Heart right ventricle (tissue), 16 donors: ENCODE measurements at regions of chr2 and their contacts with region 1.

Region 1: GRCh38 chr2:188291617-188292347 is at the start of gene GULP1:
- DNase-seq: peak; percentile 69 to 76
- ATAC-seq: peak; percentile 85 to 93 (median 90)
- H3K4me3 ChIP-seq: peak within 1 kb of the TSS; percentile 53 to 82 (median 72)
- H3K27ac ChIP-seq: peak within 1 kb of the TSS; percentile 63 to 92 (median 80)
- H3K4me1 ChIP-seq: peaks cover 0 to 35% (median 15%) of the 10 kb centered on the region in 9 donors
- H3K27me3 ChIP-seq: peaks cover 0 to 34% (median 0%) of the 10 kb centered on the region in 7 donors
- CTCF ChIP-seq: peak; percentile 41 to 79 (median 67)
- total RNA-seq, gene GULP1: 2.0 to 6.0 (median 4.9) TPM

Region 2: DNA sequence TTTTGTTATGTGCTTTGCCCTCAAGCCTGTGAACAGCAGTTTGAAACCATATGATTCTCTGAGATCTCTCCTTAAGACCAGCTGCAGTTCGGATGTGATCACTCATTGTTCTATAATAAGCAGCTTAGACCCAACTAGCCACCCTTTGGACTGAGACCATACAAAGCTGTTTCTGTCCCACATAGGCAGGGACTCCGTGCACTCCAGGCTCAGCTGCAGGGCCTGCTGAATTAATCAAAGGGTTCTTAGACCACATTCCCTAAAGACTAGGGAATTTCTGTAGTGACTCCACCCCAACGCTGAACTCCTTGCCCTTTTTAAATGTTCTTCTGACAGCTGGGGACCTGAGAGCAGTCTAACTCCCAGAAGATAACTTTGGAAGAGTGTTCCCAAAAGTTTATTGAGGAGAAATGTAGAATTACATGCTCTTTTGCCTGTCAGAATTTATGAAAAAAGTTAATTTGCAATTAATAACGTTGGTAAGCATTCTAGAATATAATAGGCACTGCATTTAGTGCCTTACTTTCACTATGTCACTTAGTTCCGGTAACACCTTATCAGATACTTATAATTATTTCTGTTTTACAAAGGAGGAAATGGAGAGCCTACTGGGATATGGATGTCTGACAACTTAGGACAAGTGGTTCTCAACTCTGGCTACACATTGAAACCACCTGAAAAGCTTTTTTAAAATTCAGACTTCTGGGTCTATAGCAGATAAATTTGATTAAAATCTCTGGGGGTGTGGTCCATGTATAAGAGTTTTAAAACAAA is 42.2 kb after region 1 on chr2:
- intact Hi-C with region 1: loop called in 3 of 10 experiments (anchors 5 kb)
- DNase-seq: peak; percentile 17 to 40
- ATAC-seq: peak; percentile 70 to 92 (median 90)
- H3K4me3 ChIP-seq: peak overlapping the region in 4 of 10 donors; percentile 16 to 20 (median 18)
- H3K27ac ChIP-seq: peak overlapping the region in 8 of 10 donors; percentile 27 to 64 (median 52)
- H3K4me1 ChIP-seq: peaks cover 0 to 30% (median 12%) of the 10 kb centered on the region in 9 donors
- H3K27me3 ChIP-seq: no peaks in the 10 kb centered on the region
- CTCF ChIP-seq: no peak

Region 3: GRCh38 chr2:188369365-188369764 is 77.6 kb after region 1 on chr2:
- intact Hi-C with region 1: loop called in 5 of 10 experiments (anchors 5 to 10 kb)
- DNase-seq: peak in 1 of 2 donors; percentile 51
- ATAC-seq: peak in 7 of 8 donors; percentile 67 to 78 (median 71)
- H3K4me3 ChIP-seq: no peak overlapping the region
- H3K27ac ChIP-seq: no peak overlapping the region
- H3K4me1 ChIP-seq: peaks cover 0 to under 1% (median 0%) of the 10 kb centered on the region in 9 donors
- H3K27me3 ChIP-seq: no peaks in the 10 kb centered on the region
- CTCF ChIP-seq: peak; percentile 30 to 79 (median 69)

Region 4: DNA sequence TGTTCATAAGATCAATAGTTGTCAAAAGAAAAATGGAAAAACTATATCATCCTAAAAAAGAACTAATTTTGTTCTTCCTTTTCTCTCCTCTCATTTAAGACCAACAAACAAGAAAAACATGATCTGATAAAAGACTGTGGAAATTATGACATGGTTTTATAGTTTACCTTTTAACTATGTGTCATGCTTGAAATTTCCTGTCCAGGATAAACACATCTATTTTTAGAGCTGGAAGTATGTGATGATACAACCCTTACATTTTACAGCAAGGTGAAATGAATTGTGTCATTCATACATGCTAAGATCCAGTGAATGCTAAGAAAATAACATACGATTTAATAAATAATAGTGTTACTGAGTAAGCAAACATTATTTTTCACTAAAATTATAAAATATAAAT is 89.8 kb after region 1 on chr2:
- intact Hi-C with region 1: loop called in 2 of 10 experiments (anchors 5 to 10 kb)
- DNase-seq: no peak
- ATAC-seq: peak in 1 of 8 donors; percentile 27
- H3K4me3 ChIP-seq: no peak overlapping the region
- H3K27ac ChIP-seq: peak overlapping the region in 1 of 10 donors; percentile 25
- H3K4me1 ChIP-seq: peaks cover 0 to 20% (median 9%) of the 10 kb centered on the region in 9 donors
- H3K27me3 ChIP-seq: no peaks in the 10 kb centered on the region
- CTCF ChIP-seq: no peak

Region 5: DNA sequence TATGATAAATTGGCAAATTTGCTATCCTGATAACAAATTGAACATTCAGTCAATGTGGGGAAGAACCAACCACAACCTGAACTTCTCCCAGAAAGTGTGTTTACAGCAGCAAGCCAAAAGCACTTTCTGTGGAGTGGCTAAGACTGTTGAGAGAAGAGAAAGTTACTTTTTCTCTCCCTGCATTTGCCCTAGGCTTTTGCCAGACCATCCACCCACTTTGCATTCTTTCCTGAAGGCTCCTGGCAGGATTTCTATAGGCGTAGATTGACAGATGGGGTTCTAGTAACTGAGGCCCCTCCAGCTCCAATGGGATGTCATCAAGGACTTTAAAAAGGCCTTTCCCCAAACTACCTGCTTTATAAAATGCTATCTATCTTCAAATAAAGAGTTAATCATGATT is 215.1 kb after region 1 on chr2:
- intact Hi-C with region 1: loop called in 4 of 10 experiments (anchors 5 to 10 kb)
- DNase-seq: no peak
- ATAC-seq: no peak
- H3K4me3 ChIP-seq: no peak overlapping the region
- H3K27ac ChIP-seq: no peak overlapping the region
- H3K4me1 ChIP-seq: no peaks in the 10 kb centered on the region
- H3K27me3 ChIP-seq: no peaks in the 10 kb centered on the region
- CTCF ChIP-seq: no peak

Region 6: GRCh38 chr2:188512456-188512855 is 220.7 kb after region 1 on chr2:
- intact Hi-C with region 1: loop called in 4 of 10 experiments (anchors 5 to 10 kb)
- DNase-seq: no peak
- ATAC-seq: peak in 1 of 8 donors; percentile 47
- H3K4me3 ChIP-seq: no peak overlapping the region
- H3K27ac ChIP-seq: no peak overlapping the region
- H3K4me1 ChIP-seq: no peaks in the 10 kb centered on the region
- H3K27me3 ChIP-seq: no peaks in the 10 kb centered on the region
- CTCF ChIP-seq: peak in 7 of 9 donors; percentile 41 to 70 (median 62)

Region 7: GRCh38 chr2:188551671-188552070 is 259.9 kb after region 1 on chr2:
- intact Hi-C with region 1: no loop called
- DNase-seq: no peak
- ATAC-seq: no peak
- H3K4me3 ChIP-seq: no peak overlapping the region
- H3K27ac ChIP-seq: no peak overlapping the region
- H3K4me1 ChIP-seq: peaks cover 0 to 7% (median 0%) of the 10 kb centered on the region in 9 donors
- H3K27me3 ChIP-seq: no peaks in the 10 kb centered on the region
- CTCF ChIP-seq: no peak